Activated CD4-positive, alpha-beta T cell treated with anti-CD3 and anti-CD28 coated beads for 36 hours (primary cell): ENCODE measurements at regions of chr2 and their contacts with region 1.

Region 1: GRCh38 chr2:172465417-172466334 is 38.3 kb downstream of the ITGA6 start:
- DNase-seq: peak; percentile 85
- ATAC-seq: peak; percentile 47
- H3K4me3 Mint-ChIP-seq: peak overlapping the region; percentile 11
- H3K27ac Mint-ChIP-seq: peak overlapping the region; percentile 60
- H3K4me1 Mint-ChIP-seq: peaks cover 62% of the 10 kb centered on the region
- H3K27me3 Mint-ChIP-seq: no peaks in the 10 kb centered on the region

Region 2: GRCh38 chr2:171390941-171391516 is 1074.6 kb before region 1 on chr2:
- CTCF ChIA-PET with region 1: no interaction called
- POLR2A ChIA-PET with region 1: no interaction called
- intact Hi-C with region 1: no loop called
- DNase-seq: peak; percentile 62
- ATAC-seq: peak; percentile 94
- H3K4me3 Mint-ChIP-seq: no peak overlapping the region
- H3K27ac Mint-ChIP-seq: peak overlapping the region; percentile 43
- H3K4me1 Mint-ChIP-seq: peaks cover 24% of the 10 kb centered on the region
- H3K27me3 Mint-ChIP-seq: no peaks in the 10 kb centered on the region

Region 3: GRCh38 chr2:171703574-171704347 is 761.9 kb before region 1 on chr2:
- CTCF ChIA-PET with region 1: interaction called, 4 read pairs
- POLR2A ChIA-PET with region 1: no interaction called
- intact Hi-C with region 1: loop called (anchors 1 to 5 kb)
- DNase-seq: no peak
- ATAC-seq: no peak
- H3K4me3 Mint-ChIP-seq: no peak overlapping the region
- H3K27ac Mint-ChIP-seq: no peak overlapping the region
- H3K4me1 Mint-ChIP-seq: peaks cover 8% of the 10 kb centered on the region
- H3K27me3 Mint-ChIP-seq: no peaks in the 10 kb centered on the region

Region 4: GRCh38 chr2:172102391-172103278 is 363.0 kb before region 1 on chr2 and contains the start of gene DLX2:
- CTCF ChIA-PET with region 1: interaction called, 6 read pairs
- POLR2A ChIA-PET with region 1: no interaction called
- intact Hi-C with region 1: loop called (anchors 2 to 5 kb)
- DNase-seq: peak; percentile 85
- ATAC-seq: peak; percentile 50
- H3K4me3 Mint-ChIP-seq: peak within 1 kb of the TSS; percentile 73
- H3K27ac Mint-ChIP-seq: peak within 1 kb of the TSS; percentile 66
- H3K4me1 Mint-ChIP-seq: peaks cover 48% of the 10 kb centered on the region
- H3K27me3 Mint-ChIP-seq: peaks cover 60% of the 10 kb centered on the region
- total RNA-seq, gene DLX2: not detected

Region 5: GRCh38 chr2:172200495-172201085 is 265.1 kb before region 1 on chr2:
- CTCF ChIA-PET with region 1: interaction called, 10 read pairs
- POLR2A ChIA-PET with region 1: interaction called, 3 read pairs
- intact Hi-C with region 1: loop called (anchors 1 to 2 kb)
- DNase-seq: peak; percentile 52
- ATAC-seq: no peak
- H3K4me3 Mint-ChIP-seq: no peak overlapping the region
- H3K27ac Mint-ChIP-seq: no peak overlapping the region
- H3K4me1 Mint-ChIP-seq: peaks cover 13% of the 10 kb centered on the region
- H3K27me3 Mint-ChIP-seq: peaks cover 33% of the 10 kb centered on the region

Region 6: DNA sequence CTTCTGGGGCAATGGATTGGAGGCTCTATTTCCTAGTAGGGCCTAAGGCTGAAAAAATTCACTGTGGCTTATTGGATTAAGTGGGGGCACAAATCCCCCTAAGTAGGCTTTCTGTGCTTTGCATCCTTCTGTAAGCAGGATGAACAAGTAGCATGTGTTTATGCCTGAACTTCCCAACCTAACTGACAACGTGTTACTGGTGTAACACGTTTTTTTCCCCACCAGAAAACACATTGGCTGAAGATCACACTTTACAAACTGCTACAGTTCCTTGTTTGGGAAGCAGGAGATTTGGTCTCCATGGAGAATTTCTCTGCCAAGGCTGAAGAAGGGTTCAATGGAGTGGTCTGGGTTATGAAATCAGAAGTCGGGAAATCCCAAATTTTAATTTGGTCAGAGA is 45.5 kb before region 1 on chr2:
- CTCF ChIA-PET with region 1: interaction called, 405 read pairs
- POLR2A ChIA-PET with region 1: no interaction called
- intact Hi-C with region 1: no loop called
- DNase-seq: no peak
- ATAC-seq: no peak
- H3K4me3 Mint-ChIP-seq: no peak overlapping the region
- H3K27ac Mint-ChIP-seq: no peak overlapping the region
- H3K4me1 Mint-ChIP-seq: peaks cover 27% of the 10 kb centered on the region
- H3K27me3 Mint-ChIP-seq: no peaks in the 10 kb centered on the region

Region 7: GRCh38 chr2:172478353-172478752 is 12.7 kb after region 1 on chr2:
- CTCF ChIA-PET with region 1: interaction called, 27 read pairs
- POLR2A ChIA-PET with region 1: no interaction called
- intact Hi-C with region 1: no loop called
- DNase-seq: no peak
- ATAC-seq: no peak
- H3K4me3 Mint-ChIP-seq: no peak overlapping the region
- H3K27ac Mint-ChIP-seq: no peak overlapping the region
- H3K4me1 Mint-ChIP-seq: peaks cover 38% of the 10 kb centered on the region
- H3K27me3 Mint-ChIP-seq: no peaks in the 10 kb centered on the region

Region 8: GRCh38 chr2:172639823-172640222 is 174.1 kb after region 1 on chr2:
- CTCF ChIA-PET with region 1: no interaction called
- POLR2A ChIA-PET with region 1: no interaction called
- intact Hi-C with region 1: no loop called
- DNase-seq: peak; percentile 38
- ATAC-seq: peak; percentile 95
- H3K4me3 Mint-ChIP-seq: no peak overlapping the region
- H3K27ac Mint-ChIP-seq: peak overlapping the region; percentile 1
- H3K4me1 Mint-ChIP-seq: peaks cover 16% of the 10 kb centered on the region
- H3K27me3 Mint-ChIP-seq: no peaks in the 10 kb centered on the region

Region 9: GRCh38 chr2:172710584-172711024 is 244.9 kb after region 1 on chr2:
- CTCF ChIA-PET with region 1: interaction called, 3 read pairs
- POLR2A ChIA-PET with region 1: no interaction called
- intact Hi-C with region 1: loop called (anchors 1 kb)
- DNase-seq: peak; percentile 62
- ATAC-seq: no peak
- H3K4me3 Mint-ChIP-seq: no peak overlapping the region
- H3K27ac Mint-ChIP-seq: no peak overlapping the region
- H3K4me1 Mint-ChIP-seq: no peaks in the 10 kb centered on the region
- H3K27me3 Mint-ChIP-seq: peaks cover 5% of the 10 kb centered on the region

Region 10: GRCh38 chr2:173607606-173608311 is 1142.1 kb after region 1 on chr2:
- CTCF ChIA-PET with region 1: no interaction called
- POLR2A ChIA-PET with region 1: no interaction called
- intact Hi-C with region 1: no loop called
- DNase-seq: no peak
- ATAC-seq: no peak
- H3K4me3 Mint-ChIP-seq: no peak overlapping the region
- H3K27ac Mint-ChIP-seq: no peak overlapping the region
- H3K4me1 Mint-ChIP-seq: no peaks in the 10 kb centered on the region
- H3K27me3 Mint-ChIP-seq: peaks cover 22% of the 10 kb centered on the region